Prostate gland (tissue), 2 donors: ENCODE measurements at regions of chr4 and their contacts with region 1.

Region 1: DNA sequence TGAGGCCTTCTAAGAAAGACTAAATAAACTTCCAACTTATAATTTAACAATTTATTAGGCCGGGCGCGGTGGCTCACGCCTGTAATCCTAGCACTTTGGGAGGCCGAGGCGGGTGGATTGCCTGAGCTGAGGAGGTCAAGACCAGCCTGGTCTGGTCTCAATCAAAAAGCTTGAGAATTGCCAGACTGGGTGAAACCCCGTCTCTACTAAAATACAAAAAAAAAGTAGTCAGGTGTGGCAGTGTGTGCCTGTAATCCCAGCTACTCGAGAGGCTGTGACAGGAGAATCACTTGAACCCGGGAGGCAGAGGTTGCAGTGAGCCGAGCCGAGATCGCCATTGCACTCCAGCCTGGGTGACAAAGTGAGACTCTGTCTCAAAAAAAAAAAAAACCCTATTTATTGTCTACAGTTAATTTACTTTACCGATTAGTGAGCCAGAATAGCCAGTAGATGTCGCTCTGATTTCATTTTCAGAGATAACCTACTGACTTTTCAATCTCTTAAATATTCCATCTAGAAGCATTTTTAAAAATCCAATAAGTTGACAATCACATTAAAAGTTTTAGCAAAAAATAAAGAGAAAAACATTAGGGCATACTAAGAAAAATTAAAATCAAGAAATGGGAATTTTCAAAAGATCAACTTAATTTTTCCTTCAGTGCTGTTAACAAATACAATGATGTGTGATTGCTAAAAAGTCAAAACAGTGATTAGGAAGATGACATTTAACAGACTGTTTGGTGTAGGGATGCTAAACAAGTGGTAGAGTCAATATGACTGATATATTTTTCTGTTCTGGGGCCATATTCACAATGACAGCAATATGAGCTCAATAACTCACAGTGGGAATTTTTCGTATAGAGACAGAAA is 4.3 kb upstream of the SHROOM3 start:
- DNase-seq: peak; percentile 10
- H3K4me3 ChIP-seq: no peak overlapping the region
- H3K27ac ChIP-seq: no peak overlapping the region
- H3K4me1 ChIP-seq: no peaks in the 10 kb centered on the region
- H3K27me3 ChIP-seq: no peaks in the 10 kb centered on the region
- CTCF ChIP-seq: peak in 3 of 4 experiments; percentile 62 to 70 (median 67)
- POLR2A ChIP-seq: no peak

Region 2: DNA sequence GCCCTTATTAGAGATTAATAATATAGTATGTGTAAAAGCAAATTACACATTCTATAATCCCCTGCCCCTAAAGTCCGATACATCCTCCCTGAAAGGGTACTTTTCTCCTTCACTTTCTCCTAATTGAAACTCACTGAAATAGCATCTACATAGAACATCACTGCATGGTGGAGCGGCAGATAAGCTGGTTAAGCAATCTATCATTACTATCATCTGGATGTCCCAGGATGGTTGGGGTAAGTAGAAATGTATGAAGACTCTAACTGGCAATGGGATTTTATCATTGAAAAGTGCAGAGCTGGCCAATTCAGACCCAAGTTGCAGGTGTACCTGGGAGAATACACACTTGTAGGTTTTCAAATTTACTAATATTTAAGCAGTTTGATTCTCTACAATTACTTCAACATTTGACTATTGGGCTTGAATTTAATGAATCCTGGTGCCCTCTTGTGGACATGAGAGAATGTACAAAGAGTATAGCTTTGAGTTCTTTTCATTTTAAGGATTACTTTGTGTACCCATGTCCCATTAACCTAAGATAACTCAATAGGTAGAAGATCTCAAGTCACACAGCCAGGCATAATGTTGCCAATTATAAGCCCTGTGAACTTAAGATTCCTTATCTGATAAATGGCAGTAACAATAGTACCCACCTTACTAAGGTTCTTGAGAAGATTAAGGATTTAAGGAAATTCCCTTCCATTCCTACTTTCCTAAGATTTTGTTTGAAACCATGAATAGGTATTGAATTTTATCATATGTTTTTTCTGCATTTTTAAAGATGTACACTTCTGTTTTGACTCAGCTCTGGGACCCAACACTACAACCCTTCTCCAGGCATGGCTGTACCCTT is 74.1 kb after region 1 on chr4:
- intact Hi-C with region 1: loop called (anchors 2 kb)
- DNase-seq: peak; percentile 28
- H3K4me3 ChIP-seq: no peak overlapping the region
- H3K27ac ChIP-seq: no peak overlapping the region
- H3K4me1 ChIP-seq: no peaks in the 10 kb centered on the region
- H3K27me3 ChIP-seq: no peaks in the 10 kb centered on the region
- CTCF ChIP-seq: peak; percentile 39 to 80 (median 64)
- POLR2A ChIP-seq: no peak

Region 3: GRCh38 chr4:76758290-76758882 is 327.6 kb after region 1 on chr4:
- intact Hi-C with region 1: loop called (anchors 10 kb)
- DNase-seq: no peak
- H3K4me3 ChIP-seq: no peak overlapping the region
- H3K27ac ChIP-seq: peak overlapping the region; percentile 47 to 54
- H3K4me1 ChIP-seq: no peaks in the 10 kb centered on the region
- H3K27me3 ChIP-seq: no peaks in the 10 kb centered on the region
- CTCF ChIP-seq: peak; percentile 51 to 72 (median 63)
- POLR2A ChIP-seq: no peak